Colonic mucosa (tissue), 4 donors: ENCODE measurements at regions of chr13 and their contacts with region 1.

Region 1: DNA sequence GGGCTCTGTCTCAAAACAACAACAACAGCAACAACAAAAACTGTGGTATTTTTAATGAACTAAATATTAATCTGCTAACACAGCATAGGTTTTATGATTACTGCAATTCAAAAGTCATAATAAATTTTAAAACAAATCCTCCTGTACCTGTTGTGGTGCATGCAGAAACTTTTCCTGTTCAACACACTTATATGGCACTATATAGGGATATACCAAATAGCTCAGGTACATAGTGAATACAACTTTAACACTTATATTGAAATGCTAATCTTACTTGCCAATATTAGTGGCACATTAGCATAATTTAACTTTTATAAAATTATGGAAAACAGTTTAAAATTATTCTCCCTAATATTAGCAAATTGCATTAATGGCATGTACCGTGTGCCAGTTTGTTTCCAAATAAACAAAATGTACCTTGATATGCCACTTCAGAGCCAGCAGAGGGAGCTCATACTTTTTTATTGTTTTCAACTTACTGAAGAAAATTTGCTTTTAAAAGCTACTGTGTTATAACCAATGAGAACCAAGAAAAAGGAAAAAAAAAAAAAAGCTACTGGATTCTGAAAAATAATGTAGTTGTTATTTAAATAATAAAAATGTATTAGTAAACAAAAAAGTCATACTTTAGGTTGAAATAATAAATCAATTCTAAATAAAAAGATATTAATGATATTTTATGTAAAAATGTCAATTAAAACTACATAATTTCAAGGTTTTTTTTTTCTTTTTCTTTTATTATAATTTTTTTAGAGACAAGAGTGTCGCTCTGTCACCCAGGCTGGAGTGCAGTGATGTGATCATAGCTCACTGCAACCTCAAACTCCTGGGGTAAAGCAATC is 18.0 kb upstream of the RBM26 start:
- DNase-seq: no peak
- H3K4me3 ChIP-seq: no peak overlapping the region
- H3K27ac ChIP-seq: no peak overlapping the region
- H3K4me1 ChIP-seq: no peaks in the 10 kb centered on the region
- H3K27me3 ChIP-seq: no peaks in the 10 kb centered on the region
- CTCF ChIP-seq: peak; percentile 57

Region 2: DNA sequence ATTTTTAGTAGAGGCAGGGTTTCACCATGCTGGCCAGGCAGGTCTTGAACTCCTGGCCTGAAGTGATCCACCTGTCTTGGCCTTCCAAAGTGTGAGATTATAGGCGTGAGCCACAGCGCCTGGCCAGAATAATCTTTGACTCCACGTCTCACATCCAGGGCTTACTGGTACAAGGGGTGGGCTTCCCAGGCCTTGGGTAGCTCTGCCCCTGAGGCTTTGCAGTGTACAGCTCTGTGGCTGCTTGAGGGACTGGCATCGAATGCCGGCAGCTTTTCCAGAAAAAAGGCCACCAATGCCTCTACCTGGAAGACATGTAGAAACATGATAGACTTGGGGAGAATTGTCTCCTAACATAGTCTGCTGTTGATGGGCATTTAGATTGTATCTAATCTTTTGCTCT is 114.7 kb after region 1 on chr13:
- intact Hi-C with region 1: loop called (anchors 2 kb)
- DNase-seq: no peak
- H3K4me3 ChIP-seq: no peak overlapping the region
- H3K27ac ChIP-seq: no peak overlapping the region
- H3K4me1 ChIP-seq: no peaks in the 10 kb centered on the region
- H3K27me3 ChIP-seq: no peaks in the 10 kb centered on the region
- CTCF ChIP-seq: no peak

Region 3: DNA sequence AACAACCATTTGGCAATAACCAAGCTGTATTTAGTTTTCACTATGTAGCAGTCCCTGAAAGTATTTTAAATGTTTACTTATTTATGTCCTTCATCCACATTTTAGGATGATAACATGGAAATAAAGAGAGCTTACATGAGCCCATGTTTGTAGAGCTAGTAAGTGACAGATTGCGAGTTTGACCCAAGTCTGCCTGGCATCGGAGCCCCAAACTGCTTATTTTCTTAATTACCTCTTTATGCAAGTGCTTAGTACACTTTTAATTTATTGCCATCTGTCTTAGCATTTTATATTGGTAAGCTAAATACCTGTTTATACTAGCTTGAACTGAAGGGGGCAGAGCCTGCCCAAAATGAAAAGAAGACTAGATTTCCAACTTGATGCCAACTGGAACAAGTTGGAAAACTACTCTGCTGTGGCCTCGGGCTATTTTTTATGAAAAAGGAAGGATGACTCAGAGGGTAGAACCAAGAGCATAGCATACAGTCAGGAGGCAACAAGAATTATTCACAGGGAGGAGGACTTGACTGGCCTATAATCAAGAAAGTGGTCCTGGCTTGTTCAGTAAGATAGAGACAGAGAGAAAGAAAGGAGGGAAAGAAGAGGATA is 207.1 kb after region 1 on chr13:
- intact Hi-C with region 1: no loop called
- DNase-seq: no peak
- H3K4me3 ChIP-seq: no peak overlapping the region
- H3K27ac ChIP-seq: no peak overlapping the region
- H3K4me1 ChIP-seq: no peaks in the 10 kb centered on the region
- H3K27me3 ChIP-seq: no peaks in the 10 kb centered on the region
- CTCF ChIP-seq: no peak